ENCODE measurements at regions of chr2 and their contacts with region 1.

Region 1: DNA sequence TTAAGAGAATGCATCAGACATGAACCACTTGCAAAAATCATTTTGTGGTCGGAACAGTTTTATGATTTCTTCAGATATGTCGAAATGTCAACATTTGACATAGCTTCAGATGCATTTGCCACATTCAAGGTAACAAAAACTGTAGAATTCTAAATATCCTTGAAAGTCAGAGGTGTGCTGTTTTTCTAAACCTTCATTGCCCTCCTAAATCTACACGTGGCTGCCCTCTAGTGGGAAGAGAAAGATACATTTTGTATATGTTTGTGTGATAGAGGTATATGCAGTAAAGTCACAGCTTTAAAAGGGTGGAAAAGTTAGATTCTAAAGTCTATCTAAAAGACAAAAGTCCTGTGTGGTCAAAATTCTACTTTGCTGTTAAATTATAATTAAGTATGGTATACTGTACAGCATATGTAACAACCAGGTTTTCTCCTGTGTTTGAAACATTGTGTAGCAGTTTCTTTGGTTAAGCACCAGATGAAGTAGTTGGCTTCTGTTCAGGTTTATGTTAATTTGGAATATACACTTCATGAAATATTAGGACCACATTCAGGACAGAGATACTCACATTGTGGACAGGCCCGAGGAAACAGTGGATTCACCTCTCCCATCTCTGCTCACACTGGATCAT is 65.9 kb upstream of the ITM2C start:
- ATAC-seq: peak in 4 of 8 experiments; percentile 36 to 76 (median 44)
- H3K4me3 ChIP-seq: no peak overlapping the region
- H3K27ac ChIP-seq: no peak overlapping the region
- H3K4me1 ChIP-seq: no peaks in the 10 kb centered on the region

Region 2: GRCh38 chr2:230643576-230644291 is 155.2 kb before region 1 on chr2:
- in situ Hi-C with region 1: loop called in 1 of 9 experiments (anchors 25 kb)
- ATAC-seq: no peak
- H3K4me3 ChIP-seq: no peak overlapping the region
- H3K27ac ChIP-seq: no peak overlapping the region
- H3K4me1 ChIP-seq: no peaks in the 10 kb centered on the region

Region 3: GRCh38 chr2:231104115-231104713 is 305.3 kb after region 1 on chr2:
- in situ Hi-C with region 1: no loop called
- ATAC-seq: peak in 6 of 8 experiments; percentile 34 to 84 (median 66)
- H3K4me3 ChIP-seq: no peak overlapping the region
- H3K27ac ChIP-seq: no peak overlapping the region
- H3K4me1 ChIP-seq: no peaks in the 10 kb centered on the region

Measured in motor neuron (in vitro differentiated cells).